Heart left ventricle (tissue), 16 donors: ENCODE measurements at regions of chr12 and their contacts with region 1.

Region 1: DNA sequence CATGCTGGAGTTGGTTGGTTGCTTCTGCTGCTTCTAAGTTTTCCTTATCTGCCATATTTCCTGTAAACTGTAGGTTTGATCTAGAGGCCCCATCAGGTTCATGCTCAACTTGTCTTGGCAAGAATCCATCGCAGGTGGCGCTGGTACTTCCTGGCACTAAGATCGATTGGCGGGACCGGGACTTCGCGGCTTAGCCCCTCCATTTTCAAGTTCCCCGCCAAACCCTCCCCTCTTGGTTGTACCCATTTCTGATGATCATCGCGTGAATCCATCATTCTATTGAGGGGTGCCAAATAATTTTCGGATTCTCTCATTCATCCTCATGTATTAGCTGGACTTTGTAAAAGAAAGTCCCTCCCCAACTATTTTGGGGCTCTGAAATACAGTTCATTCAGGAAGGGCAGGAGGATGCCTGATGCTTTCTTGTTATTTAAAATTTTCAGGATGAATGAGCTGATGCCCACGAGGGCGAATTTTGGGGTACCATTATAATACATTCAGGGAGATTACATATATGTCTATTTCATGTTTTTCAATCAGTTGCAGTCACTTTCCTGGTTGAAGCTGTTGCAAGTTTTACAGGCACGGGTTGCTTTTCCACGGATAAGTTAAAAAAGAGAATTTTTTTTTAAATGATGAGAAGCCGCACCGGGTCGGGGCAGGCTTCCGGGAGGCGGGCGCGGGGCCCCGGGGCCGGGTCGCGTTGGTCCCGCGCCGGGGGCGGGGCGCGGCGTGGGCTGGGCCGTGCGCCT is 395 bp upstream of the BRI3BP start:
- DNase-seq: peak in 3 of 5 donors; percentile 56 to 75 (median 74)
- ATAC-seq: peak; percentile 20 to 83 (median 70)
- H3K4me3 ChIP-seq: peak overlapping the region; percentile 14 to 89 (median 58)
- H3K27ac ChIP-seq: peak overlapping the region in 3 of 12 donors; percentile 22 to 71 (median 29)
- H3K4me1 ChIP-seq: peaks cover 0 to 38% (median 15%) of the 10 kb centered on the region in 12 donors
- H3K27me3 ChIP-seq: no peaks in the 10 kb centered on the region
- CTCF ChIP-seq: peak in 3 of 12 donors; percentile 9 to 13 (median 10)
- POLR2A ChIP-seq: no peak

Region 2: DNA sequence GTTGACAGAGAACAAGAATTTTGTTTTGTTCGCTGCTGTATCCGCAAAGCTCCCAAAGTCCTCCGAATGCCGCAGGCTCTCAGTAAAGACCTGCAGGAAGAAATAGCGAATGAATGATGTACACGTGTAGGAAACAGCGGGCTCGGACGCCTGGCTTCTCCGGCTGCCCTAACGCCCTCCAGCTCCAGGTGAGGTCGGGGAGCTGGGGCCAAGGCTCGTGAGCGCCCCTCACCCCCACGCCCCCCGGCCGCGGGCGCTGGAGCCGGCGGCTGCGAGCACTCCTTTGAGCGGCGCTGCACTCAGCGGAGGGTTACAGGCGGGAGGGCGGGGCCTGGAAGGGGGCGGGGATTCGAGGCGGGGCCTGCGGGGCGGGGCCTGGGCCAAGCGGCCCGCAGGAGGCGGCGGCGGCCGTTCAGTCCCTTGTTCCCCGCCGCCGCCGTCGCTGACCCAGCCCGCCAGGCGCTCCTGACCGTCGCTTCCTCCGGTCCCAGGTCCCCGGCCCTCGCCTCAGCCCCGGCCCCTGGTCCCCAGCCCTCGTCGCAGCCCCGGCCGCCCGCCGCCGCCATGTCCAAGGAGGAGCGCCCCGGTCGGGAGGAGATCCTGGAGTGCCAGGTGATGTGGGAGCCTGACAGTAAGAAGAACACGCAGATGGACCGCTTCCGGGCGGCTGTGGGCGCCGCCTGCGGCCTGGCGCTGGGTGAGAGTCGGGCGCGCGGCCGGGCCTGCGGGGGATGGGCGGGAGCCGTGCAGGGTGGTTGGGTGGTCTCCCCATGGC is 72.2 kb after region 1 on chr12 and contains the start of gene AACS:
- intact Hi-C with region 1: loop called in 1 of 10 experiments (anchors 10 kb)
- DNase-seq: peak; percentile 79 to 91 (median 82)
- ATAC-seq: peak; percentile 75 to 97 (median 93)
- H3K4me3 ChIP-seq: peak within 1 kb of the TSS; percentile 45 to 97 (median 88)
- H3K27ac ChIP-seq: peak within 1 kb of the TSS in 11 of 12 donors; percentile 40 to 85 (median 73)
- H3K4me1 ChIP-seq: peaks cover 0 to 45% (median 18%) of the 10 kb centered on the region in 12 donors
- H3K27me3 ChIP-seq: peaks cover 0 to 4% (median 0%) of the 10 kb centered on the region in 9 donors
- CTCF ChIP-seq: peak in 1 of 12 donors; percentile 16
- POLR2A ChIP-seq: peak in 1 of 2 donors; percentile 62
- total RNA-seq, gene AACS: 10.2 to 19.3 (median 12.4) TPM